ENCODE measurements at regions of chr4 and their contacts with region 1.

Region 1: GRCh38 chr4:74444891-74445642 is at the start of gene AREG:
- DNase-seq: peak; percentile 91
- H3K4me3 Mint-ChIP-seq: peak within 1 kb of the TSS; percentile 87
- H3K27ac Mint-ChIP-seq: peak within 1 kb of the TSS; percentile 75
- H3K4me1 Mint-ChIP-seq: peaks cover 4% of the 10 kb centered on the region
- H3K27me3 Mint-ChIP-seq: no peaks in the 10 kb centered on the region
- total RNA-seq, gene AREG: 1.5 to 2.1 TPM

Region 2: GRCh38 chr4:74320559-74321118 is 124.4 kb before region 1 on chr4:
- CTCF ChIA-PET with region 1: interaction called, 3 read pairs
- intact Hi-C with region 1: loop called (anchors 1 kb)
- DNase-seq: peak; percentile 56
- H3K4me3 Mint-ChIP-seq: no peak overlapping the region
- H3K27ac Mint-ChIP-seq: no peak overlapping the region
- H3K4me1 Mint-ChIP-seq: no peaks in the 10 kb centered on the region
- H3K27me3 Mint-ChIP-seq: peaks cover 19% of the 10 kb centered on the region

Region 3: GRCh38 chr4:74376888-74377483 is 68.1 kb before region 1 on chr4:
- CTCF ChIA-PET with region 1: interaction called, 6 read pairs
- intact Hi-C with region 1: loop called (anchors 1 kb)
- DNase-seq: no peak
- H3K4me3 Mint-ChIP-seq: no peak overlapping the region
- H3K27ac Mint-ChIP-seq: no peak overlapping the region
- H3K4me1 Mint-ChIP-seq: no peaks in the 10 kb centered on the region
- H3K27me3 Mint-ChIP-seq: peaks cover 4% of the 10 kb centered on the region

Region 4: GRCh38 chr4:74531963-74532794 is 87.1 kb after region 1 on chr4:
- CTCF ChIA-PET with region 1: interaction called, 3 read pairs
- intact Hi-C with region 1: loop called (anchors 2 kb)
- DNase-seq: peak; percentile 6
- H3K4me3 Mint-ChIP-seq: no peak overlapping the region
- H3K27ac Mint-ChIP-seq: no peak overlapping the region
- H3K4me1 Mint-ChIP-seq: no peaks in the 10 kb centered on the region
- H3K27me3 Mint-ChIP-seq: peaks cover 4% of the 10 kb centered on the region

Region 5: GRCh38 chr4:74640111-74640903 is 195.2 kb after region 1 on chr4:
- CTCF ChIA-PET with region 1: no interaction called
- intact Hi-C with region 1: no loop called
- DNase-seq: no peak
- H3K4me3 Mint-ChIP-seq: no peak overlapping the region
- H3K27ac Mint-ChIP-seq: no peak overlapping the region
- H3K4me1 Mint-ChIP-seq: no peaks in the 10 kb centered on the region
- H3K27me3 Mint-ChIP-seq: peaks cover 4% of the 10 kb centered on the region

Measured in activated naive CD4-positive, alpha-beta T cell treated with anti-CD3 and anti-CD28 coated beads for 36 hours (primary cell).